HepG2 (cell line): ENCODE measurements at regions of chr5 and their contacts with region 1.

Region 1: GRCh38 chr5:58818462-58818861 is 235.6 kb downstream of the RAB3C start:
- DNase-seq: no peak
- ATAC-seq: no peak
- H3K4me3 ChIP-seq: no peak overlapping the region
- H3K27ac ChIP-seq: no peak overlapping the region
- H3K4me1 ChIP-seq: no peaks in the 10 kb centered on the region
- H3K27me3 ChIP-seq: no peaks in the 10 kb centered on the region
- CTCF ChIP-seq: no peak
- EP300 ChIP-seq: no peak
- POLR2A ChIP-seq: no peak
- RAD21 ChIP-seq: no peak

Region 2: DNA sequence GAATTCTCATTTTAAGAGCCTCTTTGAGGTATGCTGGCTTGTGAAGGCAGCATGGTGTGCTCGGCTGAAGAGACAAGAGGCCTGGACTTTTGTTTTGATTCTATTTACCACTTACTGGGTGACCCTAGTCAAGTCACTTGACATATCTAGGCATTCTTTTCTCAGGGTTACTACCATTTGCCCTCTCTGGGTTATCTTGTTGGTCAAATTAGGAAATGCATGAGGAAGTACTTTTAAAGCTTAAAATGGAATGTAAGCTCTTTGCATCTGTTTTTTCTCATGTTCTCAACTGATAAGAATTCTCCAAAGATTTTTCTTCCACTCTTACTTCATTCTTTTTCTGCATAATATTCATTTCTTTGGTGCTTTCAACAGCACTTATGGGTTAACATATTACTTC is 531.7 kb before region 1 on chr5:
- CTCF ChIA-PET with region 1: no interaction called
- POLR2A ChIA-PET with region 1: no interaction called
- in situ Hi-C with region 1: no loop called
- intact Hi-C with region 1: no loop called
- DNase-seq: no peak
- ATAC-seq: no peak
- H3K4me3 ChIP-seq: no peak overlapping the region
- H3K27ac ChIP-seq: no peak overlapping the region
- H3K4me1 ChIP-seq: no peaks in the 10 kb centered on the region
- H3K27me3 ChIP-seq: no peaks in the 10 kb centered on the region
- CTCF ChIP-seq: no peak
- EP300 ChIP-seq: no peak
- POLR2A ChIP-seq: no peak
- RAD21 ChIP-seq: no peak

Region 3: GRCh38 chr5:58498340-58498942 is 320.0 kb before region 1 on chr5:
- CTCF ChIA-PET with region 1: interaction called, 5 read pairs
- POLR2A ChIA-PET with region 1: no interaction called
- in situ Hi-C with region 1: loop called (anchors 25 kb)
- intact Hi-C with region 1: loop called (anchors 1 kb)
- DNase-seq: peak; percentile 24
- ATAC-seq: 0 out of 3 replicates have a peak, but pooled peaks have one; percentile 40
- H3K4me3 ChIP-seq: no peak overlapping the region
- H3K27ac ChIP-seq: no peak overlapping the region
- H3K4me1 ChIP-seq: no peaks in the 10 kb centered on the region
- H3K27me3 ChIP-seq: no peaks in the 10 kb centered on the region
- CTCF ChIP-seq: peak; percentile 66
- EP300 ChIP-seq: no peak
- POLR2A ChIP-seq: no peak
- RAD21 ChIP-seq: no peak

Region 4: DNA sequence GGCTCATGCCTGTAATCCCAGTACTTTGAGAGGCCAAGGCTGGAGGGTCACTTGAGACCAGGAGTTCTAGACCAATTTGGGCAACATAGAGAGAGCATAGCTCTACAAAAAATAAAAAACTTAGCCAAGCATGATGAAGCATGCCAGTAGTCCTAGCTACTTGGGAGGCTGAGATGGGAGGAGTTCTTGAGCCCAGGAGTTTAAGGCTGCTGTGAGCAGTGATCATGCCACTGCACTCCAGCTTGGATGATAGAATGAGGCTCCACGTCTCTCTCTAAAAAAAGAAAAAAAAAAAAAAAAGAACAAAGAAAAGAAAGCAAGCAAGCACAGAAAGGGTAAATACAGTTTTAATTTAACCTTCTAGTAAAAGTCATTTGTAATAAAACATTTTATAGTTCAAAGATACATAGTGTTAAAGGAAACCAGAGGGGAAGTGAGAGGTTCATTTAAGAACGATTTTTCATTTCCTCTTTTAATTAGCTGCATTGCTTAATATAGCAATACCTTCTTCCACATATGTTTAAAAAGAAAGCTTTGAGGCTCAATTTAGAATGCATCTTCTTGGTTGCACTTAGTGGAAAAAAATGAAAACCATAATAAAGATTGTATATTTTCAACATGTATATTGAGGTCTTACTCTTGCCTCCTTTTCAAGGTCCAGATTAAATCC is 312.4 kb before region 1 on chr5:
- CTCF ChIA-PET with region 1: no interaction called
- POLR2A ChIA-PET with region 1: no interaction called
- in situ Hi-C with region 1: loop called (anchors 25 kb)
- intact Hi-C with region 1: no loop called
- DNase-seq: no peak
- ATAC-seq: no peak
- H3K4me3 ChIP-seq: no peak overlapping the region
- H3K27ac ChIP-seq: no peak overlapping the region
- H3K4me1 ChIP-seq: no peaks in the 10 kb centered on the region
- H3K27me3 ChIP-seq: no peaks in the 10 kb centered on the region
- CTCF ChIP-seq: no peak
- EP300 ChIP-seq: no peak
- POLR2A ChIP-seq: no peak
- RAD21 ChIP-seq: no peak

Region 5: DNA sequence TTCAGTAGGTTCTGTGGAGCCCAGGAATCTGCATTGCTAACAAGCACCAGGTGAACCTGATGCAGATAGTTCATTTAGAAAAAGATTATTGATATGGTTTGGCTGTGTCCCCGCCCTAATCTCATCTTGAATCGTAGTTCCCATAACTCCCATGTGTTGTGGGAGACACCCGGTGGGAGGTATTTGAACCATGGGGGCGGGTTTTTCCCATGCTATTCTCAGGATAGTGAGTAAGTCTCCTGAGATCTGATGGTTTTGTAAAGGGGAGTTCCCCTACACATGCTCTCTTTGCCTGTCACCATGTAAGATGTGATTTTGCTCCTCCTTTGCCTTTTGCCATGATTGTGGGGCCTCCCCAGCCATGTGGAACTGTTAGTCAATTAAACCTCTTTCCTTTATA is 23.6 kb before region 1 on chr5:
- CTCF ChIA-PET with region 1: no interaction called
- POLR2A ChIA-PET with region 1: no interaction called
- in situ Hi-C with region 1: no loop called
- intact Hi-C with region 1: no loop called
- DNase-seq: no peak
- ATAC-seq: no peak
- H3K4me3 ChIP-seq: no peak overlapping the region
- H3K27ac ChIP-seq: no peak overlapping the region
- H3K4me1 ChIP-seq: no peaks in the 10 kb centered on the region
- H3K27me3 ChIP-seq: no peaks in the 10 kb centered on the region
- CTCF ChIP-seq: no peak
- EP300 ChIP-seq: no peak
- POLR2A ChIP-seq: no peak
- RAD21 ChIP-seq: no peak